Dendritic cell treated with granulocyte-macrophage colony-stimulating factor and Interleukin-4, amounts not matched to agents 40 ng/mL and 50 ng/mL, for 4 days (primary cell): ENCODE measurements at regions of chr12 and their contacts with region 1.

Region 1: DNA sequence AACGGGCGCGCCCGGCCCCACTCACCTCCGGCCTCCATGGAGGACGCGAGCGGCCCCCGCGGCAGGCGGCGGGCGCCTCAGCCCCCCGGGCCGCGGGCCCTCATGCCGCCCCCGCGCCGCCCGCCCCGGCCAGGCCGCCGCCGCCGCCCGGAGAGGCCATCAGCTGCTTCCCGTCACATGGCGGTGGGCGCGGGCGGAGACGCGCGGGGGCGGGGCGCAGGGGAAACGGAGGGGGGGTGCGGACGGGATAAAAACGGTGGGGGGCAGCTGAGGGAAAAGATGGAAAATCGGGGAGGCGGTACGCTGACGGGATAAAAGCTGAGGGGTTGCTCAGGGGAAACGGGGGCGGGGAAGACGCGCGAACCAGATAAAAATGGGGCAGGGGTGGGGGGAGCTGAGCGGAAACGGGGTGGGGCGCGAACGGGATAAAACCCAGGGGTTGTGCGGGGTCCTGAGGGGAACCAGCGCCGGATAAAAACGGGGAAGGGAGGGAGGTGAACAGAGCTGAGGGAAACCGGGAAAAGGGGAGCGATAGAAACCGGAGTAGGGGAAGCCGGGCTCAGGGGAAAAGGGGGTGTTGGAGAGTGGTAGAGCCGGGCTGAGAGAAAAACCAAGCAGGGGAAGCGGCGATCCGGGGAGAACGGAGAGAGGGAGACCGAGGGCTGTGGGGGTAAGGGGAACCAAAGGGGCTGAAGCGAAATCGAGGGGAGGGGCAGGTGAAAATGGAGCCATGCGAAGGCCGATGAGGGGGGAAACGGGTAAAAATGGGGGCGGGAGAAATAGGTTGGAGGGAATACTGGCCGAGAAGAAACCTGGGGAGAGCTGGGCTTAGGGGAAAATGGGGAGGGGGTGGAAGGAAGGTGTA is at the start of gene WSB2:
- H3K4me3 Mint-ChIP-seq: peak within 1 kb of the TSS; percentile 90
- H3K27ac Mint-ChIP-seq: peak within 1 kb of the TSS; percentile 95
- H3K4me1 Mint-ChIP-seq: peaks cover 63% of the 10 kb centered on the region
- H3K27me3 Mint-ChIP-seq: no peaks in the 10 kb centered on the region

Region 2: GRCh38 chr12:117587631-117588287 is 473.5 kb before region 1 on chr12:
- intact Hi-C with region 1: no loop called
- H3K4me3 Mint-ChIP-seq: no peak overlapping the region
- H3K27ac Mint-ChIP-seq: no peak overlapping the region
- H3K4me1 Mint-ChIP-seq: no peaks in the 10 kb centered on the region
- H3K27me3 Mint-ChIP-seq: peaks cover 21% of the 10 kb centered on the region

Region 3: GRCh38 chr12:117863002-117863709 is 198.1 kb before region 1 on chr12:
- intact Hi-C with region 1: no loop called
- H3K4me3 Mint-ChIP-seq: no peak overlapping the region
- H3K27ac Mint-ChIP-seq: no peak overlapping the region
- H3K4me1 Mint-ChIP-seq: no peaks in the 10 kb centered on the region
- H3K27me3 Mint-ChIP-seq: peaks cover 2% of the 10 kb centered on the region

Region 4: DNA sequence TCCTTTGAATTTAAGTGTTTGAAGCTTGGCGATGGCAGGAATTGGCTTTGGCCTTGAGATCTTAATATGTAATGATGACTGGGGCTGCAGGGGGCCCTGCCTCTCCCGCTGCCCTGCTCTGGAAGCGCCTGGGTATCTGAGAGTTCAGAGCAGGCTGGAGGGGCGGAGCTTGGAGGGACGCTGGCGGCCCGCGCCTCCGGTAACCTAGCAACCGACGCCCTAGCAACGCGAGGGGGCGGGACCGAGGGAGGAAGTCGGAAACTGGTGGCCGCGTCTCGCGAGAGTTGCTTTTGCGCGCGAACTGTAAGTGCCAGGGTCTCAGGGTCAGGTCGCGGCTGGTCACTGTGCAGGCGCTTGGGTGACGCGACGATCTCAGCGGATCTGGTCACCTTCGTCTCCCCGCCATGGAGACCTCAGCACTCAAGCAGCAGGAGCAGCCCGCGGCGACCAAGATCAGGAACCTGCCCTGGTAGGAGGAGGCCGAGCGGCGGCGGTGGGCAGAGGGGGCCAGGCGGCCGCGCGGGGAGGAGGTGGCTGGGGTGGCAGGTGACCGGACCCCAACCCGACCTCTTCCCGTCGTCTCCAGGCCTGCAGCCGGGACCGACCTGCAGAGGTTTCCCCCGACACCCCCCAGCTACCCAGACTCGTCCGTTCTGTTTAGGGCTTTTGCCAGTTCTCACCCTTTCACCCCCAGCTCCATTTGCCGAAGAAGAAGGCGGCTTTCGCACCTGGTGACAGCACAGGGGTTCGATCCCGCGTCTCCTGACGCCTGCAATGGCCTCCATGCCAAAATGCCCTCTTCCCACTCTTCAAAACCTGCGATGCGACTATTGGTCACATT is 44.6 kb before region 1 on chr12 and contains the start of gene RFC5:
- intact Hi-C with region 1: loop called (anchors 1 kb)
- H3K4me3 Mint-ChIP-seq: peak within 1 kb of the TSS; percentile 92
- H3K27ac Mint-ChIP-seq: peak within 1 kb of the TSS; percentile 85
- H3K4me1 Mint-ChIP-seq: peaks cover 12% of the 10 kb centered on the region
- H3K27me3 Mint-ChIP-seq: peaks cover 10% of the 10 kb centered on the region

Region 5: GRCh38 chr12:118103604-118104382 is 42.5 kb after region 1 on chr12 and contains the start of gene VSIG10:
- intact Hi-C with region 1: loop called (anchors 5 kb)
- H3K4me3 Mint-ChIP-seq: peak within 1 kb of the TSS; percentile 89
- H3K27ac Mint-ChIP-seq: peak within 1 kb of the TSS; percentile 72
- H3K4me1 Mint-ChIP-seq: peaks cover 20% of the 10 kb centered on the region
- H3K27me3 Mint-ChIP-seq: peaks cover 8% of the 10 kb centered on the region

Region 6: DNA sequence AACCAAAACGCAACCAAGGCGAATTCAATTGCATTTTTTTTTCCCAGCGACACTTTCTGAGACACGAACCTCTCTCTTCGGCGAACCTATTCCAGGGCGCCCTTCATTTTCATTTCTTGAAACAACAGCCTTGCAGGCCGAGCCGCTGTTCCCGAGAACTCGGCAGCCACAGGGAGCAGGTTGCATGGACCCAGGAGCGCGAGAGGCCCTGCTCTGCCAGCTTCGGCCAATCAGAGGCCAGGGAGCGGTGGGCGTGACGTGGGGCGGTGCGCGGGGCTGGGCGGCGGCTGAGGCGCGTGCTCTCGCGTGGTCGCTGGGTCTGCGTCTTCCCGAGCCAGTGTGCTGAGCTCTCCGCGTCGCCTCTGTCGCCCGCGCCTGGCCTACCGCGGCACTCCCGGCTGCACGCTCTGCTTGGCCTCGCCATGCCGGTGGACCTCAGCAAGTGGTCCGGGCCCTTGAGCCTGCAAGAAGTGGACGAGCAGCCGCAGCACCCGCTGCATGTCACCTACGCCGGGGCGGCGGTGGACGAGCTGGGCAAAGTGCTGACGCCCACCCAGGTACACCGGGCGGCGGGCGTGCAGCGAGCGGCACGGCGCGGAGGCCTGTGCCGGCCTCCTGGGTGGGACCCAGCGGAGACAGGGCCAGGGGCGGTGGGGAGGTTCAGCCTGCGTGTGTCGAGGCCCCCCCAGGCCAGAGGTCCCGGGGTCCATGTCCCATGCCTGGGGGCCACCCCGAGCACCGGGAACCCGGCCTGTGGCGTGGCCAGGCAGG is 74.7 kb after region 1 on chr12 and contains the start of gene PEBP1:
- intact Hi-C with region 1: loop called (anchors 2 kb)
- H3K4me3 Mint-ChIP-seq: peak within 1 kb of the TSS; percentile 88
- H3K27ac Mint-ChIP-seq: peak within 1 kb of the TSS; percentile 83
- H3K4me1 Mint-ChIP-seq: peaks cover 21% of the 10 kb centered on the region
- H3K27me3 Mint-ChIP-seq: no peaks in the 10 kb centered on the region